MCF 10A (cell line): ENCODE measurements at regions of chr6 and their contacts with region 1.

Region 1: GRCh38 chr6:90369024-90369519 is 72.4 kb upstream of the BACH2 start:
- DNase-seq: peak; percentile 99
- H3K4me3 Mint-ChIP-seq: peak overlapping the region; percentile 12
- H3K27ac Mint-ChIP-seq: peak overlapping the region; percentile 68
- H3K4me1 Mint-ChIP-seq: peaks cover 11% of the 10 kb centered on the region
- H3K27me3 Mint-ChIP-seq: no peaks in the 10 kb centered on the region
- CTCF ChIP-seq: no peak

Region 2: DNA sequence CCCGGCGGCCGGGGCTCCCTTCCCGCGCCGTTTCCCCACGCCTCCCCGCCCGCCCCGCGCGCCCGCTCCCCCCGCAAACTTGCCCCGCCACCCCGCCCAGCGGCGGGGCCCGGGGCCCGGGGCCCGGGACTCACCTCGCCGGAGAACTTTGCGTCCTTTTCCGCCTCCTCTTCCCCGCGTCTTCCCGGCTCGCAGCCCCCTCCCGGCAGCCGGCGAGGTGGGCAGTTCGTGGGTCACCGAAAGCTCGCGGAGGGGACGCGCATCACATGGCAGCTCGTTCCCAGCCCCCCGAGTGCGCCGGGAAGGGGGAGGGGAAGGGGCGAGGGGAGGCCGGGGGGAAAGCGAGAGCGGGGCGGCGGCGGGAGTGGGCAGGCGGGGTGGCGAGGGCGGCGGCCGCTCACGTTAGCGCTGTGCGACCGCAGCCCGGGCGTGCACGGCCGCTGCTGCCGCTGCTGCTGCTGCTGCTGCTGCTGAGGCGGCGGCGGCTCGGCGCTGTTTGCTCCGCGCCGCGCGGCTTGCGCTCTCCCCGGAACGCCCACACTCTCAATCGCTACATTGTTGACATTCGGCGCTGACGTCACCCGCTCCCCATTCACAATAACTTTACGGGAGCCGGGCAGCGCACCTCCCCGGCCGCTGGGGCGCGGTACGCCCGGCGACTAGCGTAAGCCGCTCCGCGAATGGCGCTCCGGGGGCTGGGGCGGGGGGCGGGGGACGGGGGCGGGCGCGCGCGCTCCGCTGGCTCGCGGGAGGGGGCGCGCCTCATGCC is 72.5 kb before region 1 on chr6 and contains the start of gene BACH2:
- CTCF ChIA-PET with region 1: no interaction called
- POLR2A ChIA-PET with region 1: interaction called, 3 read pairs
- intact Hi-C with region 1: loop called (anchors 1 kb)
- DNase-seq: peak; percentile 89
- H3K4me3 Mint-ChIP-seq: peak within 1 kb of the TSS; percentile 76
- H3K27ac Mint-ChIP-seq: peak within 1 kb of the TSS; percentile 39
- H3K4me1 Mint-ChIP-seq: peaks cover 9% of the 10 kb centered on the region
- H3K27me3 Mint-ChIP-seq: peaks cover 17% of the 10 kb centered on the region
- CTCF ChIP-seq: no peak
- total RNA-seq, gene BACH2: 7.5 and 9.9 TPM in 2 replicates